ENCODE measurements at regions of chr12 and their contacts with region 1.

Region 1: GRCh38 chr12:51065530-51065929 is 17.4 kb downstream of the LETMD1 start:
- DNase-seq: no peak
- H3K4me3 ChIP-seq: no peak overlapping the region
- H3K27ac ChIP-seq: no peak overlapping the region
- H3K4me1 ChIP-seq: no peaks in the 10 kb centered on the region
- H3K27me3 ChIP-seq: no peaks in the 10 kb centered on the region
- CTCF ChIP-seq: no peak
- POLR2A ChIP-seq: no peak

Region 2: GRCh38 chr12:51025836-51026638 is 39.5 kb before region 1 on chr12 and contains the start of gene SLC11A2:
- CTCF ChIA-PET with region 1: no interaction called
- POLR2A ChIA-PET with region 1: no interaction called
- dilution Hi-C with region 1: no loop called
- intact Hi-C with region 1: no loop called
- DNase-seq: peak; percentile 95
- H3K4me3 ChIP-seq: peak within 1 kb of the TSS; percentile 64 to 79 (median 78)
- H3K27ac ChIP-seq: peak within 1 kb of the TSS; percentile 90
- H3K4me1 ChIP-seq: peaks cover 17% of the 10 kb centered on the region
- H3K27me3 ChIP-seq: peaks cover 5 to 7% of the 10 kb centered on the region in 2 experiments
- CTCF ChIP-seq: peak in 1 of 2 donors; percentile 31
- POLR2A ChIP-seq: peak; percentile 73
- total RNA-seq, gene SLC11A2: 41.1 and 56.4 TPM in 2 replicates

Region 3: GRCh38 chr12:51077971-51078370 is 12.4 kb after region 1 on chr12:
- CTCF ChIA-PET with region 1: interaction called, 6 read pairs
- POLR2A ChIA-PET with region 1: interaction called, 14 read pairs
- dilution Hi-C with region 1: no loop called
- intact Hi-C with region 1: no loop called
- DNase-seq: no peak
- H3K4me3 ChIP-seq: no peak overlapping the region
- H3K27ac ChIP-seq: no peak overlapping the region
- H3K4me1 ChIP-seq: peaks cover 12% of the 10 kb centered on the region
- H3K27me3 ChIP-seq: no peaks in the 10 kb centered on the region
- CTCF ChIP-seq: no peak
- POLR2A ChIP-seq: no peak

Measured in endothelial cell of umbilical vein (primary cell).